A549 (cell line): ENCODE measurements at regions of chr12 and their contacts with region 1.

Region 1: GRCh38 chr12:123043536-123044001 is 63.1 kb downstream of the ARL6IP4 start:
- DNase-seq: peak; percentile 77 to 83
- ATAC-seq: peak; percentile 93 to 94
- H3K4me3 ChIP-seq: no peak overlapping the region
- H3K27ac ChIP-seq: peak overlapping the region; percentile 41 to 79
- H3K4me1 ChIP-seq: peaks cover 24% of the 10 kb centered on the region
- CTCF ChIP-seq: peak; percentile 75
- EP300 ChIP-seq: no peak; a peak in 1 of 5 replicates
- POLR2A ChIP-seq: no peak
- RAD21 ChIP-seq: peak; percentile 97 to 98

Region 2: DNA sequence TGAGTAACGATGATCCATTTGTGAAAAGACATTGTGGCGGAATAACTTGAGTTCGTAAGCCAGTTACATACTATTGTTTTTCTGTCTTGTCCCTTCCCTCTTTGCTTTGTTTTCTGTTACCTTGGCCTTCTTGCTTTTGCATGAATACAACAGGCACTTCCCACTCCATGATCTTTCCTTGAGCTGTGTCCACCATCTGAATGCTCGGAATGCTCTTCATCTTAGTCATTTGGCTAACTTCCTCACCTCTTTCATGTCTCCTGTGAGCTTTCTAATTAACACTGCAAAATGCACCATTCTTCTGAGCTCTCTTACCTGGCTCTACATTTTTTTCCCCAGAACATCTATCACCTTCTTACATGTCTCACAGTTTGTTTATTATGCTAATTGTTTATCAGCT is 506.5 kb before region 1 on chr12:
- CTCF ChIA-PET with region 1: no interaction called
- POLR2A ChIA-PET with region 1: no interaction called
- DNase-seq: no peak
- ATAC-seq: no peak
- H3K4me3 ChIP-seq: no peak overlapping the region
- H3K27ac ChIP-seq: no peak overlapping the region
- H3K4me1 ChIP-seq: no peaks in the 10 kb centered on the region
- CTCF ChIP-seq: no peak
- EP300 ChIP-seq: no peak
- POLR2A ChIP-seq: no peak
- RAD21 ChIP-seq: no peak

Region 3: GRCh38 chr12:122767691-122768090 is 275.9 kb before region 1 on chr12:
- CTCF ChIA-PET with region 1: no interaction called
- POLR2A ChIA-PET with region 1: no interaction called
- DNase-seq: no peak
- ATAC-seq: no peak
- H3K4me3 ChIP-seq: no peak overlapping the region
- H3K27ac ChIP-seq: no peak overlapping the region
- H3K4me1 ChIP-seq: no peaks in the 10 kb centered on the region
- CTCF ChIP-seq: no peak
- EP300 ChIP-seq: no peak
- POLR2A ChIP-seq: no peak
- RAD21 ChIP-seq: no peak

Region 4: GRCh38 chr12:122921917-122922316 is 121.7 kb before region 1 on chr12:
- CTCF ChIA-PET with region 1: no interaction called
- POLR2A ChIA-PET with region 1: no interaction called
- DNase-seq: no peak
- ATAC-seq: no peak
- H3K4me3 ChIP-seq: no peak overlapping the region
- H3K27ac ChIP-seq: no peak overlapping the region
- H3K4me1 ChIP-seq: peaks cover 17% of the 10 kb centered on the region
- CTCF ChIP-seq: no peak
- EP300 ChIP-seq: no peak
- POLR2A ChIP-seq: no peak
- RAD21 ChIP-seq: no peak

Region 5: GRCh38 chr12:123067654-123068053 is 24.1 kb after region 1 on chr12:
- CTCF ChIA-PET with region 1: interaction called, 36 read pairs
- POLR2A ChIA-PET with region 1: no interaction called
- DNase-seq: no peak
- ATAC-seq: no peak
- H3K4me3 ChIP-seq: no peak overlapping the region
- H3K27ac ChIP-seq: no peak overlapping the region
- H3K4me1 ChIP-seq: peaks cover 21% of the 10 kb centered on the region
- CTCF ChIP-seq: no peak
- EP300 ChIP-seq: no peak
- POLR2A ChIP-seq: no peak
- RAD21 ChIP-seq: no peak

Region 6: GRCh38 chr12:123106628-123107359 is 63.2 kb after region 1 on chr12:
- CTCF ChIA-PET with region 1: interaction called, 27 read pairs
- POLR2A ChIA-PET with region 1: no interaction called
- DNase-seq: peak in 1 of 2 experiments; percentile 39
- ATAC-seq: no peak
- H3K4me3 ChIP-seq: no peak overlapping the region
- H3K27ac ChIP-seq: peak overlapping the region; percentile 20 to 66; a peak in 3 of 6 replicates
- H3K4me1 ChIP-seq: peaks cover 36% of the 10 kb centered on the region
- CTCF ChIP-seq: no peak
- EP300 ChIP-seq: no peak
- POLR2A ChIP-seq: no peak
- RAD21 ChIP-seq: no peak

Region 7: DNA sequence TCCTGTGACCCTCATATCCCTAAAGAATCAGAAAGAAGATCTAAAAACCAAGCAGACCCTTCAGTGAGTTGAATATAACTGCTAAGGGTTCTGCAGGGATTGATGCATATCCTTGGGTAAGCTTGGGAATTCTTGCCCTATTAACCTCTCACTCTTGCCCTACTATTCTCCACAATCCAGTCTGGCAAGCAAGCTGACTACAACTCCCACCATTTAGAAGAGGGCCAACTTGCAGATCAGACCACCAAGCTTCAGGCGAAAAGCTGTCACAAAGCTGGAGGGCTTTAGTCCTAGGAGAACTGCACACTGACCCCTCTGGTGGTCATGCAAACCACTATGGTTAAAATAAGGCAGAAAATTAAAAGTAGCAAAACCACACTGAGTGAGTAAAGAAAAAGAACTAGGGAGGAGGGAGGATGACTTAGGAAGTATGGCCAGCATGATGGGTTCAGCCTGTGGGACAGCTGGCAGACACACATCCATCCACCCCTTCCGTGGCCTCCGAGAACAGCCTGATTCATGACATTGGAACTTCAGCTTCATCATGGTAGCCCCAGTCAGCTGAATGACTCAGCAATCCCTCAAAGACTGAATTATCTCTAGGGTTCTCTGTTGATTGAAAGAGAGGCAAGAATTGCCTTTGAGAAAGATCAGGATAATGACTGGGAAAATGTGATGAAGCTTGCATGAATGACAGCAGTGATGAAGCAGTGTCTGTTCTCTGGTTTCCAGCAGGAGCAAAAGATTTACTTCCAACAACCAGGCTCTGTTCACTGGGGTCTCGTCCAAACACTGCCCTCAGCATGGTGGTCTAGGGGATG is 82.8 kb after region 1 on chr12:
- CTCF ChIA-PET with region 1: interaction called, 13 read pairs
- POLR2A ChIA-PET with region 1: no interaction called
- DNase-seq: peak; percentile 94
- ATAC-seq: peak; percentile 96 to 98
- H3K4me3 ChIP-seq: no peak overlapping the region
- H3K27ac ChIP-seq: peak overlapping the region; percentile 91 to 96
- H3K4me1 ChIP-seq: peaks cover 58% of the 10 kb centered on the region
- CTCF ChIP-seq: no peak
- EP300 ChIP-seq: peak; percentile 10 to 56; a peak in 2 of 5 replicates
- POLR2A ChIP-seq: no peak
- RAD21 ChIP-seq: peak in 1 of 2 experiments; percentile 17; a peak in 1 of 5 replicates

Region 8: DNA sequence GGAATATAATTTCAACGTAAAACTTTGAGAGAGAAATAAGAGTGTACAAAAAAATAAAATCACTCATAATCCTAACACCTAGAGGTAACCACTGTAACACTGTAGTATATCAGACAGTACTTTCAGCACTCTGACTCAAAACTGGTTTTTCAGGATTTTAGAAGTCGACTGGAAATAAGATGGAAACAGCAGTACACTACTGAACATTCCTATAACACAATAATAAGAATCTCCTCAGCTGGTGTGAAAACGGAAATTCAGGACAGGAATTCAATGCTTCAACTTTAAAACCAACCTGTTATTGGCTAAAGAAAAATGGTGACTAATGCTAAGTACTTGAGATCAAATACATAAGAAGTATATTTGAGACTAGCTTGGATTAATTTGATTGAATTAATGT is 119.7 kb after region 1 on chr12:
- CTCF ChIA-PET with region 1: interaction called, 20 read pairs
- POLR2A ChIA-PET with region 1: no interaction called
- DNase-seq: no peak
- ATAC-seq: no peak
- H3K4me3 ChIP-seq: no peak overlapping the region
- H3K27ac ChIP-seq: no peak overlapping the region; a peak in 1 of 6 replicates
- H3K4me1 ChIP-seq: peaks cover 38% of the 10 kb centered on the region
- CTCF ChIP-seq: no peak
- EP300 ChIP-seq: no peak
- POLR2A ChIP-seq: no peak
- RAD21 ChIP-seq: no peak

Region 9: GRCh38 chr12:123559468-123559867 is 515.9 kb after region 1 on chr12:
- CTCF ChIA-PET with region 1: no interaction called
- POLR2A ChIA-PET with region 1: no interaction called
- DNase-seq: no peak
- ATAC-seq: peak in 1 of 2 experiments; percentile 40; a peak in 2 of 6 replicates
- H3K4me3 ChIP-seq: no peak overlapping the region
- H3K27ac ChIP-seq: no peak overlapping the region
- H3K4me1 ChIP-seq: no peaks in the 10 kb centered on the region
- CTCF ChIP-seq: no peak
- EP300 ChIP-seq: no peak
- POLR2A ChIP-seq: no peak
- RAD21 ChIP-seq: no peak